ENCODE measurements at regions of chr4 and their contacts with region 1.

Region 1: DNA sequence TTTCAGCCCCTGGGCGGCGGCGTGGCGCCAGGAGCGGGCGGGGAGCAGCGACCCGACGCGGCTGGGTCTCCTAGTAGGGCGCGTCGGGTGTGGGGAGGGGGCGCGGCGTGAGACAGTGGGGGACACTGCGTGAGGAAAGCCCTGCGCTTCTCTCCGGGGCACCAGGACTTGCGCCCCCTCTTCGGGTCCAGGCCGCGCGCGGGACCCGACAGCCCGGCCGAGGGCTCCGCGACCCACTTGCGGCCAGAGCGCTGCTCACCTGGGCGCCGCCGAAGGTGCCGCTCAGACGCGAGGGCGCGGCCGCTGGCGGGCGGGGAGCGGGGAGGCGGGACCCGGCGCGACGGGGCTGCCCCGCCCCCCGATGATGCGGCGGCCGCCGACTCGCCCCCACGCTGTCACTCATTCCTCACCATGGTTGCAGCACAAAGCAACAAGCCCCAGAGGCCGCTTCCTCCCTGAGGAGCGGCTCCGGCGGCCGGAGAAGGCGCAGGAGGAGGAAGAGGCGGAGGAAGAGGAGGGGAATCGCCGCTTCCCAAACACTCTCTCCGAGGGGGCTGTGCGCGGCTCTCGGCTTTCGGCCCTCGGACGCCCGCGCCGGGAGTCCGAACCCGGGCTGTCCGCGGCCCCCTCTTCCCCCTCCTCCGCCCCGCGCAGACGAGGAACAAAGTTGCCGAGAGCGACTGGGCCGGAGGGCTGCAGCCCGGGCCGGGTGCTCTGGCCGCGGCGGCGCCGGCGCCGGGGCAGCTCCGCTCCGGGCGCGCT is at the start of gene RAPGEF2:
- DNase-seq: peak; percentile 71 to 94 (median 87)
- ATAC-seq: peak; percentile 89
- H3K4me3 ChIP-seq: peak within 1 kb of the TSS; percentile 62 to 94
- H3K4me3 Mint-ChIP-seq: peak within 1 kb of the TSS; percentile 88
- H3K27ac ChIP-seq: peak within 1 kb of the TSS; percentile 70 to 83
- H3K27ac Mint-ChIP-seq: peak within 1 kb of the TSS; percentile 87
- H3K4me1 ChIP-seq: peaks cover 14% of the 10 kb centered on the region
- H3K4me1 Mint-ChIP-seq: peaks cover 36% of the 10 kb centered on the region
- H3K27me3 ChIP-seq: peaks cover 0 to 4% of the 10 kb centered on the region in 2 experiments
- H3K27me3 Mint-ChIP-seq: peaks cover 14% of the 10 kb centered on the region
- CTCF ChIP-seq: no peak
- total RNA-seq, gene RAPGEF2: 24.1 to 25.8 TPM

Region 2: DNA sequence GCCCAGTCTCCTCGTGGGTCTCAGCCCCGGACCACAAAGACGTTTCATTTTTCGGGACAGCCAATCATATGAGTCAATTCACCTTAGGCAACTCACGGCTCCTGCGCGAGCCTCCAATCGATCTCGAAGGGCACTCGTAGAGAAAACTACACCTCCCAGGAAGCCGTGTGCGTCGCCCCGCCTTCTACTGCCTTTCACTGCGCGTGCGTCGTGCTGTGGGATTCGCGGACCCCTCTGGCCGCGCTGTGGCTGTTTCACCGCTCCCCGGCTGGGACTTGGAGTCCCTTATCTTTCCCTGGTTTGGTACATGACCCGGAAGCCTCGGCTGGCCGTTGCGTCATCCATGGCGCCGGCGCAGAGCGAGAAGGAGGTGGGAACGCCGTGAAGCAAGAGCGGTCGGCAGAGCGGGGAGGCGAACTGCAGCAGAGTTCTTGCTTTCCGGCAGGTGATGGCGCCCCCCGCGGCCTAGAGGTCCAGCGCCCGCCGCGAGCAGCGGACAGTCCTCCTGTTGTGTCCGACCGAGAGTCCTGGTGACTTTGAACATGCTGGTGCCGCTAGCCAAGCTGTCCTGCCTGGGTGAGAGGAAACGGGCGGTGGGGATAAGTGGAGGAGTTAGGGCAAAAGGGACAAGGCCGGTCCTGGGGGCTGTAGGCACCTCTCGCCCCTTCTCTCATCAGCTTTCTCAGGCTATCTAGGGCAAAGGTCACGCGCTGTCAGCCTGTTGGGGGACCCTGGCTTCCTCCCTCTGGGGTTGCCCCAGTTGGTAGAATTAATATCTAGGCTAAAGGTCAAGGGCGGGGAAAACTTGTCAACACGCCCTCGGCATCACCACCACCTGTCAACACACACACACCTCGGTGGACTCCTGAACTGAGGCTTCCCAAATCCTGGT is 430.6 kb before region 1 on chr4 and contains the start of gene ETFDH:
- CTCF ChIA-PET with region 1: no interaction called
- POLR2A ChIA-PET with region 1: no interaction called
- intact Hi-C with region 1: loop called (anchors 1 to 2 kb)
- DNase-seq: peak; percentile 97 to 100 (median 98)
- ATAC-seq: peak; percentile 80
- H3K4me3 ChIP-seq: peak within 1 kb of the TSS; percentile 71 to 96
- H3K4me3 Mint-ChIP-seq: peak within 1 kb of the TSS; percentile 97
- H3K27ac ChIP-seq: peak within 1 kb of the TSS; percentile 84 to 97
- H3K27ac Mint-ChIP-seq: peak within 1 kb of the TSS; percentile 96
- H3K4me1 ChIP-seq: peaks cover 14% of the 10 kb centered on the region
- H3K4me1 Mint-ChIP-seq: peaks cover 29% of the 10 kb centered on the region
- H3K27me3 ChIP-seq: no peaks in the 10 kb centered on the region
- H3K27me3 Mint-ChIP-seq: no peaks in the 10 kb centered on the region
- CTCF ChIP-seq: peak; percentile 37
- total RNA-seq, gene ETFDH: 13.4 to 16.7 TPM